Vagina (tissue), 2 donors: ENCODE measurements at regions of chr12 and their contacts with region 1.

Region 1: DNA sequence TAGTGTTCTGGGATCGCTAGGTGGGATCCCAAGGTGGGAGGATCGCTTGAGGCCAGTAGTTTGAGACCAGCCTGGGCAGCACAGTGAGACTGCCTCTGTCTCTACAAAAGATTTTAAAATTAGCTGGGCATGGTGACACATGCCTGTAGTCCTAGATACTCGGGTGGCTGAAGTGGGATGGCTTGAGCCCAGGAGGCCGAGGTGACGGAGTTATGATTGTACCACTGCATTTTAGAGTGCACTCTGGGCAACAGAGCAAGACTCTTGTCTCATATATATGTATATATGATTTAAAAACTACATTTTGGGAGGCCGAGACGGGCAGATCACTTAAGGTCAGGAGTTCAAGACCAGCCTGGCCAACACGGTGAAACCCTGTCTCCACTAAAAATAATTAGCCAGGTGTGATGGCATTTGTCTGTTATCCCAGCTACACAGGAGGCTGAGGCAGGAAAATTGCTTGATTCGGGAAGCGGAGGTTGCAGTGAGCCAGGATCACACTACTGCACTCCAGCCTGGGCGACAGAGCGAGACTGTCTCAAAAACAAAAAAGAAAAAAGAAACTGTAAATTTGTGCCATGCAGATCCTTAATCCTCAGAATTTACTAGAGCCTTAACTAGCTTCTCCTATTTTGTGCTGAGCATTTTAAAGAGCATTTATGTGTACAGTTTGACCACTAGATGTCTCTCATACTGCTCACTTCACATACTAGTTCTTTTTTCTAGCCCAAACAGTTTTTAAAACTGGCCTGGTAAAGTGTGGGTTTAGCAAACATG is 114.8 kb downstream of the MON2 start:
- DNase-seq: no peak
- H3K4me3 ChIP-seq: no peak overlapping the region
- H3K27ac ChIP-seq: no peak overlapping the region
- H3K4me1 ChIP-seq: no peaks in the 10 kb centered on the region
- H3K27me3 ChIP-seq: no peaks in the 10 kb centered on the region
- CTCF ChIP-seq: peak in 2 of 3 experiments; percentile 41 to 83
- POLR2A ChIP-seq: no peak

Region 2: DNA sequence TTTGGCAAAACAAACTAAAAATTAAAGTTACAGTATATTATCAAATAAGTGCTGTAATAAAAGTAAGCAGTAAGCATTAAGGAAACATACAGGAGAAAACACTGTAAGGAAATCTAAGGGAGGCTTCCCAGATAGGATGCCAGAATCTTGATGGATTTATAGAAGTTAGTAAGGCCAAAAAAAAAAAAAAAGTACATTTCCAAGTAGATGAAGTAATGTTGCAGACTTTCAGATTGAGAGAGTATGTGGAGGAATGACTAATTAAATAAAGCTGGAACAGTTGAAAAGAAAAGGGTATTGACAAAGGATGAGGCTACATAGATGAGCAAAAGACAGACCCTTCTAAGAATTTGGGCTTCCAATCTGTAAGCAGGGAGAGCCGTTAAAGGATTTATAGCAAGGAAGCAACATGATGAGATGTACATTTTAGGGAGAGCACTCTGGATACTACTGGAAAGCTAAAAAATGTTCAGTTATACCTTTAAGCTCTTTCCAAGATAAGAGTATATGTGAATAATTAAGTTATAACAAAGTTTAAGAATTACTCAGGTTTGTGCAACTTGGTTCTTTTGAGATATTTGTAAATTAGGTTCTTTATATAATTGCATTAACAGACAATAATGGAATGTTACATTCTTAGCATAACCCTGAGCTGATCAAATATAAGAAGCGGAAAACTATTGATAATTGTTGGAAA is 202.3 kb before region 1 on chr12:
- intact Hi-C with region 1: no loop called
- DNase-seq: no peak
- H3K4me3 ChIP-seq: no peak overlapping the region
- H3K27ac ChIP-seq: no peak overlapping the region
- H3K4me1 ChIP-seq: peaks cover 14% of the 10 kb centered on the region
- H3K27me3 ChIP-seq: no peaks in the 10 kb centered on the region
- CTCF ChIP-seq: no peak
- POLR2A ChIP-seq: no peak

Region 3: DNA sequence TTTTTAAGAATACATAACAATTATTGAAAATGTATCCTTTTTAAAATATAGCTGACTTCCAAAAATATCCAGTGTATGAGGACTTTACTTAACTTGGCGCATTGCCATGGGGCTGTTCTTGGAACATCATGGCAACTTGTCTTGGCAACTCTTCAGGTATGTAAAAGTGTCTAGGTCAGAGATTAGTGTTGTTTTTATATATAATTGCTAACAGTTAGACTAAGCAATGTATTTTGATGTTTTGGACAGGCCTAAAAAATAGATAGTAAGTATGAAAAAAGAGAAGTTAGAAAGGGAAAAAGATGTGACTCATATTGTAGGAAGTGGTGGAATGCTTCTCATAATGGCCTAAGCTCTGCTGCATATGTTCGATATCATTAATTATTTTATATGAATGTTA is 43.9 kb before region 1 on chr12:
- intact Hi-C with region 1: no loop called
- DNase-seq: no peak
- H3K4me3 ChIP-seq: no peak overlapping the region
- H3K27ac ChIP-seq: no peak overlapping the region
- H3K4me1 ChIP-seq: no peaks in the 10 kb centered on the region
- H3K27me3 ChIP-seq: no peaks in the 10 kb centered on the region
- CTCF ChIP-seq: no peak
- POLR2A ChIP-seq: no peak

Region 4: GRCh38 chr12:62793256-62794217 is 212.1 kb after region 1 on chr12:
- intact Hi-C with region 1: loop called (anchors 5 kb)
- DNase-seq: no peak
- H3K4me3 ChIP-seq: no peak overlapping the region
- H3K27ac ChIP-seq: no peak overlapping the region
- H3K4me1 ChIP-seq: no peaks in the 10 kb centered on the region
- H3K27me3 ChIP-seq: no peaks in the 10 kb centered on the region
- CTCF ChIP-seq: peak; percentile 83 to 93 (median 91)
- POLR2A ChIP-seq: no peak